ENCODE measurements at regions of chr5 and their contacts with region 1.

Region 1: GRCh38 chr5:178232124-178232919 is at the start of gene PHYKPL:
- H3K4me3 Mint-ChIP-seq: peak within 1 kb of the TSS; percentile 84
- H3K27ac Mint-ChIP-seq: peak within 1 kb of the TSS; percentile 94
- H3K4me1 Mint-ChIP-seq: peaks cover 89% of the 10 kb centered on the region
- H3K27me3 Mint-ChIP-seq: no peaks in the 10 kb centered on the region

Region 2: DNA sequence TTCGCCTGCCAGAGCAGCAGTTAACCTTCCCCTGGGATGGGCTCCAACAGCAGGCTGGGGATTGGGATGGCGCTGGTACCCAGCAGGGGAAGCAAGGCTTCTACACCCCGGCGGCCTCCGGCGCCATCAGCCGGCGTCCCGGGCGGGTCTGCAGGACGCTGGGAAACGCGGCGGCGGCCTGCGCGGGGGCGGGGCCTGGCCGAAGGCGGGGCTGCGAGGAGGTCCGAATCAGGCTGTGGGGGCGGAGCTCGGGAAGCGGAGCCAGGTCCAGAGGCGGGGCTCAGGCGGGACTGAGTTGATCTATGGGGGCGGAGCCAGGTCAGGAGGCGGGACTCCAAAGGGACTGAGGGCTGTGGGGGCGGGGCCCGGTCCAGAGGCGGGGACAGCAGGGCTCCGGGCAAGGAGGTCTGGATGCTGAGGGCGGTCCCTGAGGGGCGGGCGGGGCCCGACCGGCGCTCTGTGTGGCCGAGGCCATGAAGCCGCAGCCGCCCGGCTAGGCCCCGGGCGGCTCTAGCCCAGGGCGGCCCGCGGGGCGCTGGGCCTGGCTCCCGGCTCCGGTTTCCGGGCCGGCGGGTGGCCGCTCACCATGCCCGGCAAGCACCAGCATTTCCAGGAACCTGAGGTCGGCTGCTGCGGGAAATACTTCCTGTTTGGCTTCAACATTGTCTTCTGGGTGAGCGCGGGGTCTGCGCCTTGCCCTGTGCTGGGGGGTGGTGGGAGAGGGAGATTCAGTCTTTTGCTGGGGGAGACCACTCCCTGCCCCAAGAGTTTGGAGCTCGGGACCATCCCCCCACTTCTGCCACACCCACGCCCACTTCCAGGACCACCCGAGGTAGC is 1585.1 kb before region 1 on chr5 and contains the start of gene TSPAN17:
- intact Hi-C with region 1: loop called (anchors 5 kb)
- H3K4me3 Mint-ChIP-seq: peak within 1 kb of the TSS; percentile 77
- H3K27ac Mint-ChIP-seq: peak within 1 kb of the TSS; percentile 71
- H3K4me1 Mint-ChIP-seq: peaks cover 35% of the 10 kb centered on the region
- H3K27me3 Mint-ChIP-seq: peaks cover 8% of the 10 kb centered on the region

Region 3: DNA sequence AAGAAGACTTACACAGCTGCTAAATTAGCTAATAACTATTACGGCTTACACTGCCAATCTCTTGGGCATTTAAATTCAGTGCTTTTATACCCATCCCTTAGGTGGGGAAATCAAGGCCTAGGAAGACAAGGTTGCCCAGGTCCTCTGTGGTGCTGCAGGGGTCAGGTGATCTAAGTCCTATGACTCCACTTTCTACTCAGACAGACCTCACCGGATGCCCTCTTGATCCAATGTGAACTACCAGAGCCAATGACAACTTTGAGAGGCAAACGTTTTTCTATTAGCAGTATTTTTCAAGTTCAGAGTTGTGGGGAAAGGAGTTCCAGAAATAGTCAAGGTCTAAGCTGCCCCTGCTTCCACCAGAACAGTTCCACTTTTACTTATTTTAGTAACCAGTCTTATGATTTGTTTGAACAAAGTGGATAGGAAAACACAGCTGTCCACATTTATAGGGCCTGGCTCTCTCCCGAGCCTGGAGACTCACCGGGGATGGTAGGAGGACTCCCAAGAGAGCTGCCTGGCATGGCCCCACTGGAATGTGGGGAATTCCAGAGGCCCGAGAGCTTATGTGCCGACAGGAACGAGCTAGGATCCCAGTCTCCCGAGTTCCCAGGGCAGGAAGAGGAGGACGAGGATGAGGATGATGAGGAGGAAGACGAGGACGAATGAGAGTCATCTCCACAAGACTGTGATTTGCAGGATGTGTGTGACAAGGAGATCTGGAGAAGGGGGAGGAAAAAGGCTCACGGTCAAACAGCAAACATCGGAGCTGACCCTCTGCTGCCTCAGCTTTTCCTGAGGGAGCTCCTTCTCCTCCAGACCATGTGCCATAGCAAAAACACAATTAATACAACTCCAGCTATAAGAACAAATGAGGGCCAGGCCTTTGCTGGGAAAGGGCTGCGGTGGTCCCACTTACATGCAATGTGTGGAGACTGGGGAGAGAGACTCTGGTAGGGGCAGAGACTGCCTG is 694.6 kb before region 1 on chr5:
- intact Hi-C with region 1: no loop called
- H3K4me3 Mint-ChIP-seq: no peak overlapping the region
- H3K27ac Mint-ChIP-seq: no peak overlapping the region
- H3K4me1 Mint-ChIP-seq: no peaks in the 10 kb centered on the region
- H3K27me3 Mint-ChIP-seq: no peaks in the 10 kb centered on the region

Region 4: DNA sequence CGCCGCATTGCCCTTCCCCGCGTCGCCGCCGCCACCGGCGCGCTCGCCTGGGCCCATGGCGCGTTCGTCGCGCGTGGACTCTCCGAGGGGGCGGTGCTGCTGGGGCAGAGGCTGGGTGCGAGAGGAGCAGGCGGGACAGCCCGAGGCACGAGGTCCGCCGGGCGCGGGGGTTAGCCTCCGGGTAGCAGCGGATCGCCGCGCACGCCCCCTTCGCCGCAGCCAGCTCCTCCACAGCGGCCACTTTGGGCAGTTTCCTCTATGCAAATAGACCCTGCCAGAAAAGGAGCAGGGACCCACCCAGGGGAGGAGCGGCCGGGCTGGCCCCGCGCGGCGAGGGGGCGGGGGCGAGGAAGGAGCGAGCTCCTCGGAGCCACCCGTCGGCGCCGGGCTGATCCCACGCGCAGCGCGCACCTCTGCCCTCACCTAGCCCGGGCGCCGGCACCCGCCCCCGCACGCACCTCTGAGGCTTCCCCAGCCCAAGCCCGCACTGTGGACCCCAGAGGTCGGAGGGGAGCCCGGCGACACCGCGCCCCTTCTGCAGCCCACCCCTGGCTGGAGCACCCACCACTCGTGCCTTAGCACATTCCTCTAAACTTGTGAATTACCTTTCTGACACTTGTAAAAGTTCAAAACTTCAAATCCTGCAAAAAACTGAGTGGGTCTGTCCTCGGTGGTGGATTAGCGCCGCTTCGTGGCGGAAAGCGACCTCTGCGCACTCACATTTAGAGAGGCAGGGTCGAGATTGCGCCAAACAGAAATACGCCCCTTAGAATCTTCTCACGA is 358.0 kb after region 1 on chr5 and contains the start of gene COL23A1:
- intact Hi-C with region 1: loop called (anchors 5 kb)
- H3K4me3 Mint-ChIP-seq: peak within 1 kb of the TSS; percentile 76
- H3K27ac Mint-ChIP-seq: peak within 1 kb of the TSS; percentile 54
- H3K4me1 Mint-ChIP-seq: peaks cover 29% of the 10 kb centered on the region
- H3K27me3 Mint-ChIP-seq: peaks cover 44% of the 10 kb centered on the region